MCF 10A (cell line): ENCODE measurements at regions of chr1 and their contacts with region 1.

Region 1: DNA sequence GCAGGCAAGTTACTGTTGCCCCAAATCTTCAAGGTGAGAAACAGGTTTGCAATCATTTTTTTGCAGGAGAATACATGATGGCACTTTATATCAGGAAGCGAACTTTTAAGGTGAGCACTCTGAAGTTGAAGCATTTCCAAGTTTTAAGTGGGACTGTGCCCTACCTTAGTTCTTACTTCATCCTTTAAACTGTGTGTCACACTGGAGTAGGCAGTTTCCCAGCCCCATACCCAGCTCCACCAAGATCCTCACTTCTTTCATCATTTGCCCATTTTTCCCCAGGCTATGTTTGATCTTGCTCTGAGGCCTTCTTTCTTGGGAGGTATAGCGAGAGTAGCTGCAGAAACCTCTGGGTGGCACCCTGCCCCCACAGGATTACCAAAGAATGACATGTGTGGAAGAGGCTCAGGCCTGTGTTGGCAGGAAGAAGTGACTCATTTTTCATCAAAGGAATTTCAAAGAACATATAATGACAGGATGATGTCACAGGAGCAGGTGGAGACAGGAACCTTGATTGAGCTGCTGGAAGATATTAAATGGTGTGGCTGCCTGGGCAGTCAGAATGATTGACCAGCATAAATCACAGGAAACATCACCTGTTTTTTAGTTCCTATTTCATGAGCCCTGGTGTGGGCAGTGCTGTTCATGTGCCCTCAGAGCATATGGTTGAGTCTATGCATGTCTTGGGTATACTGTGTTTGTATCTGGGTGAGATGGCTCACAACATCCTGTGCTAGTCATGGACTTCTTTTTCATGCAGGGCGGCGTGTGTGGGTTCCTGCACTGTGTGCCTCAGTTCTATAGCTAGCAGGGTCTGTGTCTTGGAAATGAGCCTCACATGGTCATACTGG is 20.8 kb upstream of the MACF1 start:
- DNase-seq: peak; percentile 98
- H3K4me3 Mint-ChIP-seq: peak overlapping the region; percentile 53
- H3K27ac Mint-ChIP-seq: peak overlapping the region; percentile 88
- H3K4me1 Mint-ChIP-seq: peaks cover 52% of the 10 kb centered on the region
- H3K27me3 Mint-ChIP-seq: no peaks in the 10 kb centered on the region
- CTCF ChIP-seq: peak; percentile 29

Region 2: GRCh38 chr1:38512789-38513188 is 670.9 kb before region 1 on chr1:
- CTCF ChIA-PET with region 1: no interaction called
- POLR2A ChIA-PET with region 1: no interaction called
- intact Hi-C with region 1: no loop called
- DNase-seq: peak; percentile 20
- H3K4me3 Mint-ChIP-seq: no peak overlapping the region
- H3K27ac Mint-ChIP-seq: no peak overlapping the region
- H3K4me1 Mint-ChIP-seq: no peaks in the 10 kb centered on the region
- H3K27me3 Mint-ChIP-seq: peaks cover 39% of the 10 kb centered on the region
- CTCF ChIP-seq: no peak

Region 3: GRCh38 chr1:39165049-39165448 is 18.7 kb before region 1 on chr1:
- CTCF ChIA-PET with region 1: interaction called, 10 read pairs
- POLR2A ChIA-PET with region 1: interaction called, 24 read pairs
- intact Hi-C with region 1: no loop called
- DNase-seq: no peak
- H3K4me3 Mint-ChIP-seq: no peak overlapping the region
- H3K27ac Mint-ChIP-seq: no peak overlapping the region
- H3K4me1 Mint-ChIP-seq: peaks cover 27% of the 10 kb centered on the region
- H3K27me3 Mint-ChIP-seq: no peaks in the 10 kb centered on the region
- CTCF ChIP-seq: no peak